ENCODE measurements at regions of chrX and their contacts with region 1.

Region 1: GRCh38 chrX:81377329-81377728 is 175.4 kb downstream of the SH3BGRL start:
- DNase-seq: peak in 3 of 4 experiments; percentile 5 to 12 (median 7)
- ATAC-seq: no peak
- H3K4me3 ChIP-seq: no peak overlapping the region
- H3K27ac ChIP-seq: no peak overlapping the region
- H3K4me1 ChIP-seq: no peaks in the 10 kb centered on the region
- H3K27me3 ChIP-seq: no peaks in the 10 kb centered on the region
- CTCF ChIP-seq: peak; percentile 9 to 44 (median 21); a peak in 3 of 6 replicates
- EP300 ChIP-seq: no peak
- POLR2A ChIP-seq: no peak
- RAD21 ChIP-seq: peak; percentile 31 to 55; a peak in 3 of 4 replicates

Region 2: GRCh38 chrX:81174286-81174685 is 203.0 kb before region 1 on chrX:
- CTCF ChIA-PET with region 1: no interaction called
- POLR2A ChIA-PET with region 1: no interaction called
- in situ Hi-C with region 1: no loop called
- intact Hi-C with region 1: loop called (anchors 2 kb)
- DNase-seq: peak in 1 of 4 experiments; percentile 9
- ATAC-seq: 0 out of 3 replicates have a peak, but pooled peaks have one; percentile 32
- H3K4me3 ChIP-seq: no peak overlapping the region
- H3K27ac ChIP-seq: no peak overlapping the region
- H3K4me1 ChIP-seq: no peaks in the 10 kb centered on the region
- H3K27me3 ChIP-seq: no peaks in the 10 kb centered on the region
- CTCF ChIP-seq: peak in 1 of 3 experiments; percentile 20; a peak in 1 of 6 replicates
- EP300 ChIP-seq: no peak
- POLR2A ChIP-seq: no peak
- RAD21 ChIP-seq: 0 out of 4 replicates have a peak, but pooled peaks have one; percentile 8 to 14